Activated T-helper 2 cell treated with anti-CD3 and anti-CD28 coated beads, Interferon-gamma antibody, Interleukin-2, Interleukin-4, amounts not matched to agents 10 μg/mL and 5 μg/mL and 100 μg/mL, durations not matched to agents 14 hours and 24 hours and 36 hours (primary cell): ENCODE measurements at regions of chr15 and their contacts with region 1.

Region 1: GRCh38 chr15:64893481-64894394 is 18.0 kb upstream of the ANKDD1A start:
- DNase-seq: peak; percentile 97
- H3K4me3 Mint-ChIP-seq: peak overlapping the region; percentile 86
- H3K27ac Mint-ChIP-seq: peak overlapping the region; percentile 96
- H3K4me1 Mint-ChIP-seq: peaks cover 62% of the 10 kb centered on the region
- H3K27me3 Mint-ChIP-seq: no peaks in the 10 kb centered on the region

Region 2: DNA sequence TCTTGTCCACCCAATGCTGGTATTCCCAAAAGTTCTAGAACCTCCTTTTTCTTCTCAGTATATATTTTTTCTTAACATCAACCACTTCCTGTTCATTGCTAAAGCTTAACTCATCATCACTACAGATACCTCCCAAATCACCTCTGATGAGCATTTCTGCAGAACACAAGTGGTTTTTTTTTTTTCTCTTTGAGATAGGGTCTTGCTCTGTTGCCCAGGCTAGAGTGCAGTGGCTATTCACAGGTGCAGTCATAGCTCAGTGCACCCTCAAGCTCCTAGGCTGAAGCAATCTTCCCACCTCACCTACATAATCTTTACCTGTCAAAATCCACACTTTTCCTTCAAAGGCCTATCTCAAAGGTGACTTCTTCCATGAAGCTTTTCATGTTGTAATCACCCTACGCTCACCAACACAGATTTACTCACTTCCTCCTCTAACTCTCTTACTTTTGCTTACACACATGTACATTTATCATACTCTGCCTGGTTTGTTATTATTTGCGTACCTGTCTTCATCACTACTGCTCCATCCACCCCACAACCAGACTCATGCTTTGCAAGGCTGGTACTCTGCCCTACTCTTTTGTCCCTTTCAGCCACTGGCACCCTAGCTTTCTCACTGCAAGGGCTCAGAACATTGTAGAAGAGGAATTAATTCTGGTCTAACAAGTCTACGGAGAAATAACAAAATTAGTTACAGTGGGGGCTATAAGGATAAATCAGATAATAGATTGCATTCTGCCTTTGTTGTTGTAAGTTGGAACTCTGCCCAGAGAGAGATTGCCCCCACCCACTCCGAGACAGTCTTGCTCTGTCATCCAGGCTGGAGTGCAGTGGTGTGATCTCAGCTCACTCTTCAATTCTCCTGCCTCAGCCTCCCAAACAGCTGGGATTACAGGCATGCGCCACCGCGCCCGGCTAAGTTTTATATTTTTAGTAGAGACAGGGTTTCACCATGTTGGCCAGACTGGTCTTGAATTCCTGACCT is 1087.5 kb before region 1 on chr15:
- intact Hi-C with region 1: no loop called
- DNase-seq: no peak
- H3K4me3 Mint-ChIP-seq: no peak overlapping the region
- H3K27ac Mint-ChIP-seq: peak overlapping the region; percentile 18
- H3K4me1 Mint-ChIP-seq: peaks cover 45% of the 10 kb centered on the region
- H3K27me3 Mint-ChIP-seq: no peaks in the 10 kb centered on the region

Region 3: DNA sequence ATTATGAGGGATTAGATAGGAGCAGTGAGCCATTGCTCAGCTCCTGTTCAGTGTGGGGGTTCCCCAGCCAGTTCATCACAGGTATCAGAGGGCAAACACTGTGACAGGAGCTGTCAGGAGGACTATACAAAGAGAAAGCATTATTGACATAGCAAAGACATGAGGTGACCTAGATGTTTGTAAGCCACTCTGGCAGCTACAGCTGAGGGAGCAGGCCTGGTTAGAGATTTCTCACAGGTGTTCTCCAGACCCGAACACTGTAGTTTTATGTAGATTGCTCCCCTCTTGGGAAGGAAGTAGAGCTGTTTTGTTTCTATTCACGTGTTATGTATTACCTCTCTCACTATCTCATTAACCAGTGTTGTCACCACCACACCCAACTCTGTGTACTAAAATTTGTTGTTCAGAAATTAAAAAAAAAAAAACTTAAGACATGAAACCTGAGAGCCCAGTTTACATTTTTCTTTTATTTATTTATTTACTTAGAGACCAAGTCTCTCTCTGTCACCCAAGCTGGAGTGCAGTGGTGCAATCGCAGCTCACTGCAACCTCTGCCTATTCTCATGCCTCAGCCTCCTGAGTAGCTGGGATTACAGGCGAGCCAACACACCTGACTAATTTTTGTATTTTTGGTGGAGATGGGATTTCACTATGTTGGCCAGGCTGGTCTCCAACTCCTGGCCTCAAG is 242.0 kb before region 1 on chr15:
- intact Hi-C with region 1: no loop called
- DNase-seq: no peak
- H3K4me3 Mint-ChIP-seq: no peak overlapping the region
- H3K27ac Mint-ChIP-seq: peak overlapping the region; percentile 7
- H3K4me1 Mint-ChIP-seq: peaks cover 27% of the 10 kb centered on the region
- H3K27me3 Mint-ChIP-seq: no peaks in the 10 kb centered on the region

Region 4: GRCh38 chr15:64841258-64842095 is 52.3 kb before region 1 on chr15 and contains the start of gene PLEKHO2:
- intact Hi-C with region 1: loop called (anchors 1 kb)
- DNase-seq: peak; percentile 92
- H3K4me3 Mint-ChIP-seq: peak within 1 kb of the TSS; percentile 95
- H3K27ac Mint-ChIP-seq: peak within 1 kb of the TSS; percentile 83
- H3K4me1 Mint-ChIP-seq: peaks cover 49% of the 10 kb centered on the region
- H3K27me3 Mint-ChIP-seq: no peaks in the 10 kb centered on the region
- total RNA-seq, gene PLEKHO2: 15.3 and 17.0 TPM in 2 replicates

Region 5: DNA sequence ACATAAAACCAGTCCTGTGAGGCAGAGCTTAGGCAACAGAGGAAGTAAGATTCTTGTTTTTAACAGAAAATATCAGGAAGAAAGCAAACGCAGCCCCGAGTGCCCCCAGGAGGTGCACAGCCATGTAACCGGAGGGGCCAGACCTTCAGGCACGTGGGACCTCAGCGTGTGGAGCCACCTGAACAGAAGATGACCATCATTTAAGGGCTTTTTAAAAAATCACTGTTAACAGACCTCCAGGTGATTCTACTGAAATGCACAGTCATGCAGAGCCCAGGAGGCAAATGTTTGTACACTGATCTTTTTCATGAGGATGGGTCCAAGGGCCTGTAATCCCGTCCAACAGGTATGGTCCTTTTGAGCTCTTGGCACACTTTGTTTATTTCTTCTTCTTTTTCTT is 57.1 kb after region 1 on chr15:
- intact Hi-C with region 1: no loop called
- DNase-seq: no peak
- H3K4me3 Mint-ChIP-seq: no peak overlapping the region
- H3K27ac Mint-ChIP-seq: no peak overlapping the region
- H3K4me1 Mint-ChIP-seq: no peaks in the 10 kb centered on the region
- H3K27me3 Mint-ChIP-seq: no peaks in the 10 kb centered on the region

Region 6: DNA sequence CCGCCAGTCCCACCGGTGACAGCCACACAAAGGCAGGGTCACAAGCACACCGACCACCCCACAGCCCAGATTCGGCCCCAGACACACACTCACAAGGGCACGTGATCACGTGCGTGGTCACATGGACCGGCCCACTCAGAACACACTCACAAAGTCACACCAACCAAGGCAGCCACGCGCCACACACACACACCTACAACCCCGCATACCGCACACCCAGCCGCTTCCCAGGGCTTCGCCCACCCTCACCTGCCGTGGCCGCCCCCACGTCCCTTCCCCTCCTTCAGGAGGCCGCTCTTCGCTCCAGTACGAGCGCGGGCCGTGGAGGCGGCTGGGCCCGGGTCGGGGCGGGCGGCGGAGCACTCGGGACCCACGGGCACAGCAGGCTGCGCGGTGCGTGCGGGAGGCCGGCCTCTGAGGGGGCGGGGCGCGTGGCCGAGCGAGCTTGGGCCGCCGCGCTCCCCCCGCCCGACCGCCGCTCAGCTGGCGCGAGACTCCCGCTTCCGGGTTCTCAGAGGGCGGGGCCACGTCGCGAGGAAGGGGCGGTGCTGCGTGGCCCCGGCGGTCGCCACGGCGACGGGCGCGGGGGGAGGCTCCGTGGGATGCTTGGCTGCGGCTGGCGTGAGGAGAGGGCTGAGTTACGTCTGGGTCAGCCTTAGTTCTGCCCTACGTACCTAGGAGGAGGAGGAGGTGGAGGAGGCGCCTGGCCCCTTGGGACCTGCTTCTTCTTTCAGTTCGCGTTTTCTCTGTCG is 95.9 kb after region 1 on chr15 and contains the start of gene SPG21:
- intact Hi-C with region 1: loop called (anchors 5 kb)
- DNase-seq: peak; percentile 90
- H3K4me3 Mint-ChIP-seq: peak within 1 kb of the TSS; percentile 100
- H3K27ac Mint-ChIP-seq: peak within 1 kb of the TSS; percentile 90
- H3K4me1 Mint-ChIP-seq: peaks cover 38% of the 10 kb centered on the region
- H3K27me3 Mint-ChIP-seq: no peaks in the 10 kb centered on the region
- total RNA-seq, gene SPG21: 61.4 and 63.1 TPM in 2 replicates

Region 7: DNA sequence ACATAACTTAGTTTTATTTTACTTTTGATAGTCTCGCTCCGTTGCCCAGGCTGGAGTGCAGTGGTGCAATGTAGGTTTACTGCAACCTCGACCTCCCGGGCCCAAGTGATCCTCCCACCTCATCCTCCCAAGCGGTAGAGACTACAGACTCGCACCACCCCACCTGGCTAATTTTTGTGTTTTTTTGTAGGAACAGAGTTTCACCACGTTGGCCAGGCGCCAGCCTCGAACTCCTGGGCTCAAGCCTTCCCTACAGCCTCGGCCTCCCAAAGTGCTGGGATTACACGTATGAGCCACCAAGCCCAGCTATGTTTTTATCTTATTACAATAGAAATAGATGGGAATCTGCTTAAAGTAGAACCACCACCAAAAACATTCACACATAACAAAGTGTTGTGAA is 405.0 kb after region 1 on chr15:
- intact Hi-C with region 1: loop called (anchors 5 kb)
- DNase-seq: no peak
- H3K4me3 Mint-ChIP-seq: peak overlapping the region; percentile 84
- H3K27ac Mint-ChIP-seq: peak overlapping the region; percentile 63
- H3K4me1 Mint-ChIP-seq: peaks cover 18% of the 10 kb centered on the region
- H3K27me3 Mint-ChIP-seq: no peaks in the 10 kb centered on the region